Activated T-helper 1 cell treated with anti-CD3 and anti-CD28 coated beads, Interleukin-12 subunit alpha, Interleukin-12 subunit beta, Interleukin-2, Interleukin-4 antibody, amounts not matched to agents 30 ng/mL and 10 ng/mL and 1 ng/mL, durations not matched to agents 14 hours and 24 hours and 36 hours (primary cell): ENCODE measurements at regions of chr14 and their contacts with region 1.

Region 1: GRCh38 chr14:35229495-35230089 is 62.6 kb upstream of the PSMA6 start:
- DNase-seq: no peak
- H3K4me3 Mint-ChIP-seq: no peak overlapping the region
- H3K27ac Mint-ChIP-seq: no peak overlapping the region
- H3K4me1 Mint-ChIP-seq: peaks cover 42% of the 10 kb centered on the region
- H3K27me3 Mint-ChIP-seq: no peaks in the 10 kb centered on the region

Region 2: GRCh38 chr14:35088514-35088913 is 141.1 kb before region 1 on chr14:
- intact Hi-C with region 1: no loop called
- DNase-seq: no peak
- H3K4me3 Mint-ChIP-seq: no peak overlapping the region
- H3K27ac Mint-ChIP-seq: no peak overlapping the region
- H3K4me1 Mint-ChIP-seq: no peaks in the 10 kb centered on the region
- H3K27me3 Mint-ChIP-seq: no peaks in the 10 kb centered on the region

Region 3: GRCh38 chr14:35140718-35141581 is 88.6 kb before region 1 on chr14:
- intact Hi-C with region 1: loop called (anchors 1 kb)
- DNase-seq: no peak
- H3K4me3 Mint-ChIP-seq: no peak overlapping the region
- H3K27ac Mint-ChIP-seq: no peak overlapping the region
- H3K4me1 Mint-ChIP-seq: peaks cover 29% of the 10 kb centered on the region
- H3K27me3 Mint-ChIP-seq: no peaks in the 10 kb centered on the region

Region 4: DNA sequence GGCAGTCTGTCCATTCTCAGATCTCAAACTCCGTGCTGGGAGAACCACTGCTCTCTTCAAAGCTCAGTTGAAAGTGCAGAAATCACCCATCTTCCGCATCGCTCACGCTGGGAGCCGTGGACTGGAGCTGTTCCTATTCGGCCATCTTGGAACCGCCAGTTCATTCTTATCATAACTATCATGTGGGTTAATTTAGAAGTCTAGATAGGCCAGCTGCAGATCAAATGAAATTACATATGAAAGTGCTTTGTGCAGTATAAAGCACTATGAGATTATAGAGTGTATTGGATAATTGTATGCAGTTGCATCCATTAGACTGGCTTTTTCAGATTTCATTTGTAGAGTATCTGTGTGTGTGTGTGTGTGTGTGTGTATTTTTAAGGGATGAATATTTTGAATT is 49.4 kb before region 1 on chr14:
- intact Hi-C with region 1: no loop called
- DNase-seq: no peak
- H3K4me3 Mint-ChIP-seq: no peak overlapping the region
- H3K27ac Mint-ChIP-seq: no peak overlapping the region
- H3K4me1 Mint-ChIP-seq: no peaks in the 10 kb centered on the region
- H3K27me3 Mint-ChIP-seq: no peaks in the 10 kb centered on the region

Region 5: DNA sequence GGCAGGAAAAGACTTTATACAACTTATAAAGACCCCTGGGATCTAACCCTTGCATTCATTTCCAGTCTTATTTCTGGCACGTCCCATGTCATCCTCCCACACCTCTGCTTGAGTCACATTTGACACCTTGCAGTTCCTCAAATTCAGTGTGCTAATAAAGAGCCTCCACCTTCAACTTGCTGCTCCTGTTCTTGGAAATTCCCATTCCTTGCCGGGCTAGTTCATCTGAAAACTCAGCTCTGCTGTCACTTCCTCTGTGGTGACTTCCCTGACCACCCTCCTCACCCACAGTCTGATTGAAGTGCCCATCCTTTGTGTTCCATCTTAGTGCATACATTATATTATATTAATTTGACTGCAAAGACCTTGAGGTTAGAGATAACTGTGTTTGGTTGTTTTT is 25.1 kb after region 1 on chr14:
- intact Hi-C with region 1: loop called (anchors 2 kb)
- DNase-seq: peak; percentile 16
- H3K4me3 Mint-ChIP-seq: peak overlapping the region; percentile 51
- H3K27ac Mint-ChIP-seq: peak overlapping the region; percentile 32
- H3K4me1 Mint-ChIP-seq: peaks cover 60% of the 10 kb centered on the region
- H3K27me3 Mint-ChIP-seq: no peaks in the 10 kb centered on the region

Region 6: GRCh38 chr14:35301735-35302528 is 72.3 kb after region 1 on chr14:
- intact Hi-C with region 1: loop called (anchors 1 kb)
- DNase-seq: no peak
- H3K4me3 Mint-ChIP-seq: peak overlapping the region; percentile 37
- H3K27ac Mint-ChIP-seq: peak overlapping the region; percentile 89
- H3K4me1 Mint-ChIP-seq: peaks cover 43% of the 10 kb centered on the region
- H3K27me3 Mint-ChIP-seq: no peaks in the 10 kb centered on the region

Region 7: GRCh38 chr14:35789651-35790050 is 560.1 kb after region 1 on chr14:
- intact Hi-C with region 1: no loop called
- DNase-seq: no peak
- H3K4me3 Mint-ChIP-seq: no peak overlapping the region
- H3K27ac Mint-ChIP-seq: no peak overlapping the region
- H3K4me1 Mint-ChIP-seq: peaks cover 19% of the 10 kb centered on the region
- H3K27me3 Mint-ChIP-seq: no peaks in the 10 kb centered on the region